Mucosa of descending colon (tissue), 3 donors: ENCODE measurements at regions of chr1 and their contacts with region 1.

Region 1: GRCh38 chr1:174874331-174875053 is 125.3 kb upstream of the CACYBP start:
- DNase-seq: peak in 1 of 3 donors; percentile 52
- ATAC-seq: peak; percentile 61
- H3K4me3 ChIP-seq: no peak overlapping the region
- H3K4me1 ChIP-seq: peaks cover 4% of the 10 kb centered on the region
- CTCF ChIP-seq: no peak

Region 2: GRCh38 chr1:174968750-174969244 is 94.3 kb after region 1 on chr1:
- intact Hi-C with region 1: loop called in 1 of 2 experiments (anchors 10 kb)
- DNase-seq: no peak
- ATAC-seq: peak; percentile 19
- H3K4me3 ChIP-seq: no peak overlapping the region
- H3K4me1 ChIP-seq: peaks cover 46% of the 10 kb centered on the region
- CTCF ChIP-seq: no peak